ENCODE measurements at regions of chr11 and their contacts with region 1.

Region 1: DNA sequence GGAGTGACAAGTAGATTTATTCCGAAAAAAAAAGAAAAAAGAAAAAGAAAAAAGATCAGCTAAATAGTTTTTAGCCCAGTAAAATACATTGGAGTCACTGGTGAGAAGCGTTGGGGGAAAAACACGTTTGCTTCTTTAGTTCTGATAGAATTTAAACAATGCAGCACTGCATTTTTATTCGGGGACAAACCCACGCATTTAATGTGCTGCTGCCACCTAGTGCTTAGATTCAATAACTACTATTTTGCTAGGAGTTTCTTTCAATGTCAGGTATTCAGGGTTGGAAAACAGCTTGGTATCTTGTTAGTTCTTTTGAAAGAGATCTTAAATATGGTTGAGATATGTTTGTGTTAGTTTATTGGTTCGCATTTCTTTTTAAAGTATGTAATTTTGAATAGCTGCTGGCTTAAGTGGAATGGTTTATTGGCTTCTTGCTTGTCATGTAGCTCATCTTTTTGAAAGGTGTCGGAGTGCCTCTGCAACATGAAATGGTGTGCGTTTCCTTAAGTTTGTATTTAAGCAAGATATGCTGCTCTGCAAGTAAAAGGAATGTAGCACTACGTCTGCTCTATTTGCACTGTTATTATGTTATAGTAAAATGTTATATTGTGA is 41.9 kb downstream of the SVIP start:
- DNase-seq: no peak
- H3K4me3 Mint-ChIP-seq: no peak overlapping the region
- H3K27ac Mint-ChIP-seq: no peak overlapping the region
- H3K4me1 Mint-ChIP-seq: no peaks in the 10 kb centered on the region
- H3K27me3 Mint-ChIP-seq: peaks cover 2% of the 10 kb centered on the region

Region 2: GRCh38 chr11:22336587-22336986 is 451.1 kb before region 1 on chr11:
- CTCF ChIA-PET with region 1: interaction called, 11 read pairs
- POLR2A ChIA-PET with region 1: no interaction called
- DNase-seq: no peak
- H3K4me3 Mint-ChIP-seq: no peak overlapping the region
- H3K27ac Mint-ChIP-seq: no peak overlapping the region
- H3K4me1 Mint-ChIP-seq: peaks cover 4% of the 10 kb centered on the region
- H3K27me3 Mint-ChIP-seq: peaks cover 42% of the 10 kb centered on the region

Region 3: GRCh38 chr11:23021287-23021863 is 233.7 kb after region 1 on chr11:
- CTCF ChIA-PET with region 1: no interaction called
- POLR2A ChIA-PET with region 1: no interaction called
- DNase-seq: no peak
- H3K4me3 Mint-ChIP-seq: no peak overlapping the region
- H3K27ac Mint-ChIP-seq: no peak overlapping the region
- H3K4me1 Mint-ChIP-seq: no peaks in the 10 kb centered on the region
- H3K27me3 Mint-ChIP-seq: no peaks in the 10 kb centered on the region